ENCODE measurements at regions of chrX and their contacts with region 1.

Region 1: GRCh38 chrX:119482481-119483480 is 14.5 kb downstream of the SLC25A5 start:
- DNase-seq: no peak
- H3K4me3 ChIP-seq: peak overlapping the region; percentile 22
- H3K27me3 ChIP-seq: no peaks in the 10 kb centered on the region
- CTCF ChIP-seq: peak; percentile 70

Region 2: DNA sequence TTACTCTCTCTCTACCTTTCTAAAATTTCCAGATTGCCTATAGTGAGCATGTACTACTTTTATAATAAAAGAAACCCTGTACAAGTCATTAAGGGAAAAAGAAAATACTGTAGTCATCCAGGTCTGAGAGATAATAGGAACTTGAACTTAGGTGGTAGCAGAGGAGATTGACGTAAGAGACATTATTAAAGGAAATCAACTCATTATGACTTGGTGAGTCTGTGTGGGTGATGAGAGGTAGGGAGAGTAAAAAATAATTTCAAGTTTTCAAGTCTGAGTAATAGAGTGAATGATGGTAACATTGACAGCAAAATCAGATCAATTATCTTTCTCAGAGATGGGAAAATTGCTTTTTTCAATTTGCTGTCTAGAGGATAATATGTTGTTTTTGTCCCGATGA is 703.2 kb before region 1 on chrX:
- CTCF ChIA-PET with region 1: no interaction called
- POLR2A ChIA-PET with region 1: no interaction called
- DNase-seq: no peak
- H3K4me3 ChIP-seq: no peak overlapping the region
- H3K27me3 ChIP-seq: no peaks in the 10 kb centered on the region
- CTCF ChIP-seq: no peak

Region 3: GRCh38 chrX:119309661-119310267 is 173.0 kb before region 1 on chrX:
- CTCF ChIA-PET with region 1: no interaction called
- POLR2A ChIA-PET with region 1: no interaction called
- DNase-seq: no peak
- H3K4me3 ChIP-seq: no peak overlapping the region
- H3K27me3 ChIP-seq: no peaks in the 10 kb centered on the region; the same call in 1 of the 2 replicates
- CTCF ChIP-seq: no peak

Region 4: DNA sequence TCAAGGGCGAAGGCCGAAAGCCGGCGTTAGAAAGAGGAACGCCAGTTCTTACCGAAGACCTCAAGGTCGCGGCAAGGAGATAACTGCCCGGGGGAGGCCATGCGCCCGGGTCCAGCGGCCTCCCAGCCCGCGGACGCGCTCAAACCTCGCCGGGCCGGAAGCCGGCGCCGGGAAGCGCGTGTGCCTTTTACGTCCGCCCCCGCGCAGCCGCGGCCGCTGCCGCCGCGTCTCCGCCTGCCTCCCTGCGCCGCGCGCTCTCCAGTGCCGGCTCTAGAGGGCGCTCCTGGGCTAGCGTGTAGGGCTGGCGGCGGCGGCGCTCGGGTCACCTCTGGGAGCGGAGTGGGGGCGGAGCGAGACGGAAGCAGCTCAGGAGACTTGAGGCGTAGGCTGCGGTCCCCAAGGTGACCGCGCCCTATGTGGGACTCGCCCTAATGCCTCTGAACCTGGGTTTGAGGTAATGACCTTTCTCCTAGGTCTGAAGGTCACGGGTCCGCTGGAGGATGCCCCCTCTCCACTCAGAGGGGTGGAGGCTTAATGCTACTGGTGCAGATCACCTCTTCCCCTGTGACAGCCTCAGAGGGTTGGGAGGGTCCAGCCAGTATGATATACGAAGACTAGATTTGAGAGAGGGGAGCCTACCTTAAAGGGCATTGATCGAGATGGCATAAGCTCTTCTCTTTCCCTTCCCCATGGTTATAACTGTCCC is 13.7 kb before region 1 on chrX:
- CTCF ChIA-PET with region 1: interaction called, 11 read pairs
- POLR2A ChIA-PET with region 1: no interaction called
- DNase-seq: no peak
- H3K4me3 ChIP-seq: peak overlapping the region; percentile 84
- H3K27me3 ChIP-seq: no peaks in the 10 kb centered on the region
- CTCF ChIP-seq: peak; percentile 56

Region 5: DNA sequence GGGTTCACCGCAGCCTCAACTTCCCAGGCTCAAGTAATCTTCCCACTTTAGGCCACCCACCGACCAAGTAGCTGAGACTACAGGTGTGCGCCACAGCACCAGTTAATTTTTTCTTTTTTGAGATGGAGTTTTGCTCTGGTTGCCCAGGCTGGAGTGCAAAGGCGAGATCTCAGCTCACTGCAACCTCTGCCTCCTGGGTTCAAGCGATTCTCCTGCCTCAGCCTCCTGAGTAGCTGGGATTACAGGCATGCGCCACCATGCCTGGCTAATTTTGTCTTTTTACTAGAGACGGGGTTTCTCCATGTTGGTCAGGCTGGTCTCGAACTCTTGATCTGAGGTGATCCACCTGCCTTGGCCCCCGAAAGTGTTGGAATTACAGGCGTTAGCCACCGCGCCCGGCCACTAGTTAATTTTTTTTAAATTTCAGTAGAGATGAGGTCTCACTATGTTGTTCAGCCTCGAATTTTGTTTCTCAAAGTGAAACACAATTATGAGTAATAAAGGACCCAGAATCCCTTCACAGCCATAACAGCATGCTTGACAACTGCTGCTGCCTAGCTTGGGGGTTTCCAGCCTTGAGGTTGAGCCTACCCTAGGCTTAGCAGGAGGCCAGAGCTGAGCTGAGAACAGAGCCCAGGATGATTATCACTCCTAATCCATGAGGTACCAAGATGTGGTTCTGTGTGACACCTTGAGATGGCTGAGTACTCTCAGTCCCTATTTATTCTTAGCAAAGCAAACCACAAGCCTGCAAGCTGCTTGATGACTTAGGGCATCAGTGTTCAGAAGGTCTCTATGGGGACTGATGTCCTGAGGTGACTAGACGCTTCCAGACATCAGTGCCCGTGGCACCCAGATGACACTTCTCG is 165.0 kb after region 1 on chrX:
- CTCF ChIA-PET with region 1: no interaction called
- POLR2A ChIA-PET with region 1: no interaction called
- DNase-seq: no peak
- H3K4me3 ChIP-seq: no peak overlapping the region
- H3K27me3 ChIP-seq: no peaks in the 10 kb centered on the region
- CTCF ChIP-seq: no peak

Measured in BJ (cell line).